Activated T-helper 1 cell treated with anti-CD3 and anti-CD28 coated beads, Interleukin-12 subunit alpha, Interleukin-12 subunit beta, Interleukin-2, Interleukin-4 antibody, amounts not matched to agents 30 ng/mL and 10 ng/mL and 1 ng/mL, durations not matched to agents 14 hours and 24 hours and 36 hours (primary cell): ENCODE measurements at regions of chr11 and their contacts with region 1.

Region 1: DNA sequence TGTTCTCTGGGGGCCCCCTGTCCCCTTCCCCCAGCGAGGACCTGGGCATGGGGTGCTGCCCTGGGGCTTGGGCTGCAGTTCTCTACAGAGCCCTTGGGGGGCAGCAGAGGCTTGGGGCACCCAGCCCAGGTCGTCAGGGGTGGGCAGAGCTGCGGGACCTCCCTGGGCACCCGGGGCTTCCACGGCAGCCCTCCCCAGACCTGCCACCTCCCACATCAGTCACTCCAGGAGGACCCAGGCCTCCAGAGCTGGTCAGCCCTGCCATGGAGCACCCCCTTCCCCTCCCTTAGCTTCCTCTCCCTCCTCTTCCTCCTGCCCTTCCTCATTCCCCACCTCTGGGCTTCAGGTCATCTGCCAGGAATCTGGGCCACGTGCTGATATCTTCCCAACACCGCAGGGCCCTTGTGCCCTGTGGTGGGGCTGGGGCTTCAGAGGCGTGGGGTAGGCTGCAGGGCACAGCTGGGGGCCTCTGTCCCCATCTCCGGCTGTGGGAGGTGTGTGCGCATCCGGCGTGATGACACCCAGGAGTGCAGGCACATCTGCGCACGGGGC is 5.8 kb downstream of the TSPAN4 start:
- DNase-seq: peak; percentile 60
- H3K4me3 Mint-ChIP-seq: peak overlapping the region; percentile 37
- H3K27ac Mint-ChIP-seq: no peak overlapping the region
- H3K4me1 Mint-ChIP-seq: peaks cover 4% of the 10 kb centered on the region
- H3K27me3 Mint-ChIP-seq: peaks cover 4% of the 10 kb centered on the region

Region 2: GRCh38 chr11:636452-637235 is 211.8 kb before region 1 on chr11:
- intact Hi-C with region 1: no loop called
- DNase-seq: no peak
- H3K4me3 Mint-ChIP-seq: no peak overlapping the region
- H3K27ac Mint-ChIP-seq: no peak overlapping the region
- H3K4me1 Mint-ChIP-seq: no peaks in the 10 kb centered on the region
- H3K27me3 Mint-ChIP-seq: peaks cover 20% of the 10 kb centered on the region

Region 3: GRCh38 chr11:815675-816432 is 32.6 kb before region 1 on chr11:
- intact Hi-C with region 1: no loop called
- DNase-seq: no peak
- H3K4me3 Mint-ChIP-seq: no peak overlapping the region
- H3K27ac Mint-ChIP-seq: no peak overlapping the region
- H3K4me1 Mint-ChIP-seq: peaks cover 17% of the 10 kb centered on the region
- H3K27me3 Mint-ChIP-seq: no peaks in the 10 kb centered on the region

Region 4: DNA sequence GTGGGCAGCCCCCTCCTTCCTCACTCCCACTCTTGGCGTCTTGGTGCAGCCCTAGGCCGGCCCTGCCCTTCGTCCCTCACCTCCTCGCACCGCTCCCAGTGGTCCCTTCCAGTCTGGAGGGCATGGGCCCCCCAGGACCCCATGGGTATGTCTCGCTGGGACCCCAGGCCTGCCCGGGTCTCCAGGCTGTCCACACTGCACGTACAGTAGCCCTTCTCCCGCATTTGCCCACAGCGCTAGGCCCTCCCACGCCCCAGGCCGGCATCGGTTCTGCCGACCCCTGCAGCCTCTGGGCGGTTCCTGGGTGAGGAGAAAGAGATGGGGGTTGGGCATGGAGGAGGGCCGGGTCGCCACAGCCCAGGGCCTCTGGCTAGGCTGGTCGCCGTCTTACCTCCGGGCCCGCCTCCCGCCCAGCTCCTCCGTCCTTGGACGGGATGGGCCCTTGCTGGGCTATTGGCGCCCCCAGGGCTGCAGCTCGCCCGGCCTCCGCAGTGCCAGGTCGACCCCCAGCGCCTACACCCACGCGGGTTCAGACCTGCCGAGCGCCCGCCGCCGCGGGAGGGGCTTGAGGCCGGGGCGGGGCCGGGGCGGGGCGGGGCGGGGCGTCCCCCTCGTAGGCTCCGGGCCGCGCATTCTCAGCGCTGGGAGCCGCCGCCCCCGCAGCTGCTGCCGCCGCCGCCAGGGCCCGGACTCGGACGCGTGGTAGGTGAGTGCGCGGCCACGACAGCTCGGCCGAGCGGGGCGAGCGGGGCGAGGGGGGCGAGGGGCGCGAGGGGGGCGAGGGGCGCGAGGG is 15.9 kb before region 1 on chr11 and contains the start of gene CD151:
- intact Hi-C with region 1: loop called (anchors 2 kb)
- DNase-seq: no peak
- H3K4me3 Mint-ChIP-seq: peak within 1 kb of the TSS; percentile 79
- H3K27ac Mint-ChIP-seq: peak within 1 kb of the TSS; percentile 48
- H3K4me1 Mint-ChIP-seq: peaks cover 5% of the 10 kb centered on the region
- H3K27me3 Mint-ChIP-seq: peaks cover 33% of the 10 kb centered on the region
- total RNA-seq, gene CD151: 80.6 and 82.3 TPM in 2 replicates

Region 5: DNA sequence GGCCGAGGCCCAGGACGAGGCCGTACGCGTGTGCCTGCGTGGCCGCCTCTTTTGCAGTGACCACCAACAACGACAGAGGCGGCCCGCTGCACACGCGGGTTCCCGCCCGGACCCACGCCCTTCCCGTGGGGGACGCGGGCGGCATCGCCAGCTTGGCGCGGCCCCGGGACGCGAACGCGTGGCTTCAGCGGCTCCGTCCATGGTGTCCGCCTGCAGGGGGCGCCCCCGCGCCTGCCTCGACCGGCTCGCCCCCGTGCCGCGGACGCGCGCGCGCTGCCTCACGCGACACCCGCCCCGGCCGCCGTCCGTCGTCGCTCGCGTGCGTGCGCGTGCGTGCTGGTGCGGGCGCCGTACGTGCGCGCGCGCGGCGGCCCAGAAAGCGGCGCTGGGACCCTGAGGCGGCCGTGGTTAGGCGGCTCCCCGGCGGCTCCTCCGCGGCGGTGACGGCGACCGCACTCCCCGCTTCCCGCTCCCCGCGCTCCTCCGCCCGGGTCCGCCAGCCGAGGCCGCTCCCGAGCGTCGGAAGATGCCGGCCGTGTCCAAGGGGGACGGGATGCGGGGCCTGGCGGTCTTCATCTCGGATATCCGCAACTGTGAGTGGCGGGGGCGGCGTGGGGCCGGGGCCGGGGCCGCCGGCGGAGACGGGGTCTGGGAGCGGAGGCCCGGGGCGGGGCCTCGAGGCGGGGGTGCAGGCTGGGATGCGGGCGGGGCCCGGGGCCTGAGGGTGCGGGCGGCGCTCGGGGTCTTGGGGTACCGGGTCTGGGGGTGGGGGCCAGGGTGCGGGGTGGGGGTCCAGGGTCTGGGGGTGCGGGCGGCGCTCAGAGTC is 77.3 kb after region 1 on chr11 and contains the start of gene AP2A2:
- intact Hi-C with region 1: loop called (anchors 5 kb)
- DNase-seq: peak; percentile 90
- H3K4me3 Mint-ChIP-seq: peak within 1 kb of the TSS; percentile 85
- H3K27ac Mint-ChIP-seq: peak within 1 kb of the TSS; percentile 71
- H3K4me1 Mint-ChIP-seq: peaks cover 28% of the 10 kb centered on the region
- H3K27me3 Mint-ChIP-seq: no peaks in the 10 kb centered on the region
- total RNA-seq, gene AP2A2: 49.7 and 60.4 TPM in 2 replicates

Region 6: GRCh38 chr11:1050581-1051355 is 202.3 kb after region 1 on chr11:
- intact Hi-C with region 1: loop called (anchors 1 kb)
- DNase-seq: peak; percentile 63
- H3K4me3 Mint-ChIP-seq: no peak overlapping the region
- H3K27ac Mint-ChIP-seq: no peak overlapping the region
- H3K4me1 Mint-ChIP-seq: no peaks in the 10 kb centered on the region
- H3K27me3 Mint-ChIP-seq: peaks cover 8% of the 10 kb centered on the region

Region 7: DNA sequence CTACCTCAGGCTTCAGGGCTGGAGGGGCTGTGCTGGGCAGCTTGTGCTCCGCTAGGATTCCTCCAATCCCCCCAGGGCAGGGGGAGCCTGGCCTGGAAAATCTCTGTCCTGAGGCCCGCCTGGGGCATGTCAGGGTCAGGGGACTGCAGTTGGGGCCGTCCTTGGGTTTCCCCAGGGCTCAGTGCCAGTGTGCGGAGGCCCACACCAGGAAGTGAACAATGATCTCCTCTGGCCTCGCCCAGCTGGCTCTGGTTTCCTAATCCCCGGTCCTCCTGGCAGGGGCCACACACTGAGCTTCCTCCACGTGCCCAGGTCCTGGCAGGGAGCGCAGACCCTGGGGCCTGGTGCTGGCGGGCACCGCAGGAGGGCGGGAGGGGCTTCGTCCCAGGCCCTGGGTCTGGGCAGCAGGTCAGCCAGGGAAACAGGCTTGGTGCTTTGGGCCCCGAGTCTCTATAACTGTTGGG is 224.8 kb after region 1 on chr11:
- intact Hi-C with region 1: no loop called
- DNase-seq: no peak
- H3K4me3 Mint-ChIP-seq: no peak overlapping the region
- H3K27ac Mint-ChIP-seq: no peak overlapping the region
- H3K4me1 Mint-ChIP-seq: no peaks in the 10 kb centered on the region
- H3K27me3 Mint-ChIP-seq: no peaks in the 10 kb centered on the region